Colonic mucosa (tissue), 4 donors: ENCODE measurements at regions of chr16 and their contacts with region 1.

Region 1: DNA sequence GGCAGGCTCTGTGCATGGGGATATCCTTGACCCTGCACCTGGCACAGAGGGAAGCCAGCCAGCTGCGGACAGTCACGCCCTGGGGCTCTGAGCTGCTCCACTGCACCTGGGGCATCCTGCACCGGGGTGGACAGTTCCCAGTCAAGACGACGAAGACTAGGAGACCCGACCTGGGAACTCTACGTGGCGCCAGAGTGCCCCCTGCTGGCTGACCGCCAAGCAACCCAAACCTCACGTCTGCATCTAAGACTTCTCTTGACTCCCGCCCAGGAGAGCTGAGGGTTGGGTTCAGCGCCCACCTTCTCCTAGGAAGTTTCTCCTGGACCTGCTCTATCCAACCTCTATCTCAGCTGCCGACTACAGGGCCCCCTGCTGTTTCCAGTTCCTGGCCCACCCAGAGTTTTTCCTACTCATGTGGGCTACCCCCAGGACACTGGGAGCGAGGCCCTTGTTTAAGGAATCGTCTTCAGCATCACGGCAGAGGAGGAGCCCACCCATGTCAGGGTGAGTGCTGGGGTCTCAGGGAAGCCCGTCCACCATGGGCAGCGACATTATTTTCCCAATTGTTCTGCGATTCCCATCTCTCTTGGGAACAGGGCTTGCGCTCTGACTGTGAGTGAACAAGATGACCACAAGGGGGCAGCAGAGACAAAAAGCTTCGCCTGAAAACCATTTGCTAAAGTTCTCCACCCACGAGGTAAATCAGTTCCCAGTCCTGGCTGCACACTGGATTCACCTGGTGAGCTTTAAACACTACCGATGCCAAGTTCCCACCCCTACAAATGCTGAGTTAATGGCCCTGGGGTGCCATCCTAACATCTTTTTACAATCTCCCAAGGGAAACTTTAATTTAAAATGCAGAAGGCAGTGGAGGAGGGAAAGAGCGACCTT is 29.3 kb downstream of the TLE7 start:
- DNase-seq: peak; percentile 80
- H3K4me3 ChIP-seq: no peak overlapping the region
- H3K27ac ChIP-seq: no peak overlapping the region
- H3K4me1 ChIP-seq: no peaks in the 10 kb centered on the region
- H3K27me3 ChIP-seq: no peaks in the 10 kb centered on the region
- CTCF ChIP-seq: peak; percentile 87

Region 2: DNA sequence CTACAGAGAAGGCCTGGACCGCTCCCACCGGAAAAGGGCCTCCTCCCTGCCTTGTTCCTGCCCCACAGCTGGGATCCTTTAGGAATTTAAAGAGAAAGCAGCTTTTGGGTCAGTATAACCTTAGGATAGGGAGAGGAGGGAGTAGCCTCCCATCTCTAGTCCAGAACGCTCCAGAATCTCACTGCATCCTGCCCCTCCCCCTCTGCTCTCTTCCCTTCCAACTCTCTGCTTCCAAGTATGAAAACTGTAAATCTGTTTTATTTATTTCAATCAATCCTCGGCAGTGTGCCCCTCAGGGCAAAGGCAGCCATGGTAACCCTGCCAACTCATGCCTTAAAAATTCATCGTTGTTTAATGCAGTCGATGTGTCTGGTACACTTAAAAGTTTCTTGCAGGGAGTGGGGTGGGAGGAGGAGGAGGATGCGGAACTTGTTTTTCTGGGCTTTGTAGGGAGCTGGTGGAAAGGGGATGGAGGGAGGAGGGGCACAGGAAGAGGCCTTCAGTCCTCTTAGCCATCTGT is 705.5 kb before region 1 on chr16:
- intact Hi-C with region 1: no loop called
- DNase-seq: no peak
- H3K4me3 ChIP-seq: no peak overlapping the region
- H3K27ac ChIP-seq: peak overlapping the region; percentile 44
- H3K4me1 ChIP-seq: no peaks in the 10 kb centered on the region
- H3K27me3 ChIP-seq: no peaks in the 10 kb centered on the region
- CTCF ChIP-seq: no peak

Region 3: DNA sequence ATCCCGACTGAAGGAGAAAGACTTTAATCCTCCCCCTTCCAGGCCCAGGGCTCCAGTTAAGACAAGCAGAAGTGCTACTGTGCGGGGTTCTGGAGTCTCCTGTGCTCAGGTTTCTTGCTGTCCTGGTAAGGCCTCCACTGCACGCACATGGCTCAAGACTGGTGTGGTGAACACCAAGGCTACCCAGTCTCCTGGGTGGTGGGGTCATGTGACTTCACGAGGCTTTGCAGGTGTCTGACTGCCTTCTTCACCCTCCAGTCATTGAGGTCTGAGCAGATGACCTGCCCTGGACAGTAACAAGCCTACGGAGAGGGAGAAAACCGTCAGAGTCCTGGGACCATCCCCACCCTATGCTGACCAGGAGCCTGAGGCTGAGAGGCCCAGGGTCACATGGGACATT is 30.3 kb after region 1 on chr16:
- intact Hi-C with region 1: no loop called
- DNase-seq: peak; percentile 13
- H3K4me3 ChIP-seq: no peak overlapping the region
- H3K27ac ChIP-seq: no peak overlapping the region
- H3K4me1 ChIP-seq: no peaks in the 10 kb centered on the region
- H3K27me3 ChIP-seq: no peaks in the 10 kb centered on the region
- CTCF ChIP-seq: no peak

Region 4: DNA sequence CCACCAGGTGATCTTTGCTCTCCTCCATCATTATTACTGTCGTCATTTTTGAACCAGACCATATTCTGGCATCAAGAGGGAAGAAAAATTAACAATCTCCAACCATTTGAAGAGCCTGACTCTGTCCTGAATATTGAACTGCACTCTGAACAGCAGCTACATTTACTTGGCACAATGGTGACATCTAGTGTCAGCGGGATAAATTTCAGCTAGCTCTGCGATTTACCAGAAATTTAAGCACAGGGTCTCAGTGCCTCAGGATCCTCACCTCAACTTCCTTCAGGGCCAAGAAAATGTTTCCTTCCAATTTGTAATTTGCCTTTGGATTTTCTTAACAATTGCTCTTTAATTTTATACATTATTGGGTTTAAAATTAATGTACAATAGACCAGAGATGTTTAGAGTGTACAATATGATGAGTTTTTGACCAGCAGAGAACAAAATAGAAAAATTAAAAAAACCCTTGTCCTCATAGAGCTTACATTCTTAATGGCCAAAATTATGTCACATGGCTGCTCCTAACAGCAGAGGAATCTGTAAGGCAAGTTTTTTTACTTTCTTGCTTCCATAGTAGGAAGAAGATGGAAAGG is 87.4 kb after region 1 on chr16:
- intact Hi-C with region 1: loop called (anchors 5 kb)
- DNase-seq: peak; percentile 37
- H3K4me3 ChIP-seq: no peak overlapping the region
- H3K27ac ChIP-seq: no peak overlapping the region
- H3K4me1 ChIP-seq: no peaks in the 10 kb centered on the region
- H3K27me3 ChIP-seq: no peaks in the 10 kb centered on the region
- CTCF ChIP-seq: peak; percentile 61

Region 5: DNA sequence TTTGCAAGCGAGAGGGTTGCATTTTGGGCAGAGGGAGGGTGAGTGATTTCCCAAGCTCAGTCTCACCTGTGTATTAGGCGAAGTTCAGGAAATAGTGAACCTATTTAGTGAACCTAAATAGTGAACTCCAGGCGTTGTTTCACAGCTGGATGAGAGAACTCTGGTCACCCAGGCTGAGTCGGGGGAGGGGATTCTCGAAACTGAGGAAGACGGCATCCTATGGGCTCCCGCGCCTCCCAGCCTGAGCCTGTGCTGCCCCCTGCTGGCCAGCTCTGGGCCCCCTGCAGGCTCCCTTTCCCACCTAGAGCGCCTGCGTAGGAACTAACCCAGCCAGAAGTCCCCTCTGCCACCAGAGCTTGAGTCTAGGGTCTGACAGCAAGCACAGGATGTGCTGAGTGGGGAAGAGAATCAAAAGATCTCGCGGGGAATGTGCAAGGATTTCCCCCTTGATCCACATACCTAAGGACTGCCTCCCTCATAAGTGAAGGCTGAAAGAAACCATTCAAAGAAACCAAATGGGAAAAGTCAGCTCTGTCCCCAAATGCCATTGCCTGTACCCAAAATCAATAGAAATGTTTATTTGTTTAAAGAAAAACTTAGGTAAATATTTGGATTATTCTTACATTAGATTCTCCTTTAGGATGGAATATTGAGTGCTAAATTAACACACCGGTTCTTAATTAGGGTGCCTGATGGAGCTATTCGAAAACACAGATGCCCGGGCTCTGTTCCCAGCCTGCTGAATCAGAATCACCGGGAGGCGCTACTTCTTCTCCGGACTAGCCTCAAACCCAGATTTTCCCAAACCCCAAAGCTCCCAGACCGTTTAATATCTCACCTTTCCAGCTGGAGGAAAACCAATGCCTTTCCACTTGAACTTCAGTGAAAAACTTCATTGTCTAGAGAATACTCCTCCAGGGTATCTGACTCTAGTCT is 198.7 kb after region 1 on chr16:
- intact Hi-C with region 1: loop called (anchors 5 kb)
- DNase-seq: peak; percentile 73
- H3K4me3 ChIP-seq: no peak overlapping the region
- H3K27ac ChIP-seq: no peak overlapping the region
- H3K4me1 ChIP-seq: no peaks in the 10 kb centered on the region
- H3K27me3 ChIP-seq: no peaks in the 10 kb centered on the region
- CTCF ChIP-seq: peak; percentile 92

Region 6: DNA sequence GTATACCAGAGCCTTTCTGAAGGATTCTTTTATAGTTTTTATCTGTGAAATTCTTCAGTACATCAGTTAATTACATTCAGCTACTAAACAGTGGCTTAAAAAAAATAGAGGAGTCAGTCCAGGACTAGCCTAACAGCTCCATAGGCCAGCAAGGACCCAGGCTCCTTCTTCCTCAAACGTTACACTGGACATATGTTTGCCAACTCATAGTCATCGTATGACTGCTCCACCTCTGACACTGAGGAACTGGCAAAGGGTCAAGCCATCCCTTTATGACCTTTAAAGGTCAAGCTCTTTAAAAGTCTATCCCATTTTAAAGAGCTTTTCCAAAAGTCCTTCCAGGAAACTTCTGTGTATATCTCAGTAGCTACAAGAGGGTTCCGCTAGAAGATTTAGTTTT is 275.3 kb after region 1 on chr16:
- intact Hi-C with region 1: no loop called
- DNase-seq: no peak
- H3K4me3 ChIP-seq: no peak overlapping the region
- H3K27ac ChIP-seq: peak overlapping the region; percentile 13
- H3K4me1 ChIP-seq: no peaks in the 10 kb centered on the region
- H3K27me3 ChIP-seq: no peaks in the 10 kb centered on the region
- CTCF ChIP-seq: no peak